GM13976 (cell line): ENCODE measurements at regions of chr5 and their contacts with region 1.

Region 1: DNA sequence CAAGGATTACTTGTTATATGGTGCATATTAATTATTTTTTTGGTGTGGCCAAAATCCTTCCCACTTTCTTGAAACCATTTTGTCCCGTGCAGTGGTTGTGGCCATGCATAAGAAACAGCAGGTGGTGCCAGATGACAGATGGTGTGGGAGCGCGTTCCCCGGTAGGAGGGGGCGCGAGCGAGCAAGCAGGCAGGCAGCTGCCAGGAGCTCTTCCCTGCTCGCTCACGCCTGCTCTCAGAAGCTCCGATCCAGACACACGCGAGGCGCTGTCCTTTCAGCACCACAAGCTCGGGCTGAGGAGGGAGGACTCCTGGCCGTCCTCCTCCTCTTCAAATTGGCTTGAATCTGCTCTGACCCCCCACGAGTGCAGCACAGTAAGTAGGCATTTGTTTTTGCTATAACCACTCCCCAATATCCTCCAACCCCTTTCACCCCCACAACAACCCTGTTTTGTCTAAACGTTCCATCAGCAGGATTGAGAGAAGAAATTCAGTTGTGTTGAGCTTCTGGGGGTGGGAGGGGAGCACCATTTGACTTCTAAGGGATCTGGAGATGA is at the start of gene NSG2:
- DNase-seq: peak; percentile 73
- CTCF ChIP-seq: peak; percentile 74

Region 2: DNA sequence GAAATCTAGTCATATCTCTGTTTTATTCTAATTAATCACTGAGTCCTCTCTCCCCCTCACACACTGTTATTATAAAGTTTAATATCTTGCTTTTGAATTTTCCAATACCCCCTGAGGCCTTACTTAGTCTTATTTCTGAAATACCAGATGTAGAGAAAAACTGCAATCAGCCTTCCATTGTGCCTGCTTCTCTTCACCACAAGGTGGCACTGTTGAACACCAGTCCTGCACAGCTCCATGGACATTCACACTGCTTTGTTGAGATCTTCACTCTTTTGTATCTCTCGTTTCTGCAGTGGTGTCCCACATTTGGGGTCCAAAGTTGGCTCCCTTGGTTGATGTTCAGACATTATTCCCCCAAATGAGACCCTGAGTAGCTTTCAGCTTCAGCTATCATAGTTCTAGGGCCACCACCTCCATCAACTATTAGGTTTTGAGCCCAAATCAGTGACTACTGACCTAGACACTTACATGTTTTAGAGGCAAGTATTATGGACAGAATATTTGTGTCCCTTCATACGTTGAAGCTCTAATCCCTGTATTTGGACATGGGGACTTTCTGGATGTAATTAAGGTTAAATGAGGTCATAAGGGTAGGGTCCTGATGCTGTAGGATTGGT is 453.4 kb before region 1 on chr5:
- in situ Hi-C with region 1: no loop called
- DNase-seq: no peak
- CTCF ChIP-seq: peak; percentile 9

Region 3: GRCh38 chr5:174300941-174301761 is 255.6 kb after region 1 on chr5:
- in situ Hi-C with region 1: loop called (anchors 10 kb)
- DNase-seq: no peak
- CTCF ChIP-seq: no peak